Calu3 (cell line): ENCODE measurements at regions of chrX and their contacts with region 1.

Region 1: GRCh38 chrX:84339507-84340364 is 151.7 kb upstream of the RPS6KA6 start:
- DNase-seq: no peak
- H3K4me3 Mint-ChIP-seq: no peak overlapping the region
- H3K27ac Mint-ChIP-seq: no peak overlapping the region
- H3K4me1 Mint-ChIP-seq: no peaks in the 10 kb centered on the region
- H3K27me3 Mint-ChIP-seq: no peaks in the 10 kb centered on the region
- CTCF ChIP-seq: no peak

Region 2: GRCh38 chrX:84133023-84133422 is 206.7 kb before region 1 on chrX:
- CTCF ChIA-PET with region 1: no interaction called
- intact Hi-C with region 1: no loop called
- DNase-seq: no peak
- H3K4me3 Mint-ChIP-seq: no peak overlapping the region
- H3K27ac Mint-ChIP-seq: no peak overlapping the region
- H3K4me1 Mint-ChIP-seq: no peaks in the 10 kb centered on the region
- H3K27me3 Mint-ChIP-seq: no peaks in the 10 kb centered on the region
- CTCF ChIP-seq: no peak

Region 3: GRCh38 chrX:84175958-84176357 is 163.8 kb before region 1 on chrX:
- CTCF ChIA-PET with region 1: no interaction called
- intact Hi-C with region 1: no loop called
- DNase-seq: no peak
- H3K4me3 Mint-ChIP-seq: no peak overlapping the region
- H3K27ac Mint-ChIP-seq: no peak overlapping the region
- H3K4me1 Mint-ChIP-seq: no peaks in the 10 kb centered on the region
- H3K27me3 Mint-ChIP-seq: no peaks in the 10 kb centered on the region
- CTCF ChIP-seq: no peak

Region 4: GRCh38 chrX:84205276-84205675 is 134.5 kb before region 1 on chrX:
- CTCF ChIA-PET with region 1: no interaction called
- intact Hi-C with region 1: loop called (anchors 10 kb)
- DNase-seq: no peak
- H3K4me3 Mint-ChIP-seq: no peak overlapping the region
- H3K27ac Mint-ChIP-seq: no peak overlapping the region
- H3K4me1 Mint-ChIP-seq: peaks cover 7% of the 10 kb centered on the region
- H3K27me3 Mint-ChIP-seq: no peaks in the 10 kb centered on the region
- CTCF ChIP-seq: no peak

Region 5: DNA sequence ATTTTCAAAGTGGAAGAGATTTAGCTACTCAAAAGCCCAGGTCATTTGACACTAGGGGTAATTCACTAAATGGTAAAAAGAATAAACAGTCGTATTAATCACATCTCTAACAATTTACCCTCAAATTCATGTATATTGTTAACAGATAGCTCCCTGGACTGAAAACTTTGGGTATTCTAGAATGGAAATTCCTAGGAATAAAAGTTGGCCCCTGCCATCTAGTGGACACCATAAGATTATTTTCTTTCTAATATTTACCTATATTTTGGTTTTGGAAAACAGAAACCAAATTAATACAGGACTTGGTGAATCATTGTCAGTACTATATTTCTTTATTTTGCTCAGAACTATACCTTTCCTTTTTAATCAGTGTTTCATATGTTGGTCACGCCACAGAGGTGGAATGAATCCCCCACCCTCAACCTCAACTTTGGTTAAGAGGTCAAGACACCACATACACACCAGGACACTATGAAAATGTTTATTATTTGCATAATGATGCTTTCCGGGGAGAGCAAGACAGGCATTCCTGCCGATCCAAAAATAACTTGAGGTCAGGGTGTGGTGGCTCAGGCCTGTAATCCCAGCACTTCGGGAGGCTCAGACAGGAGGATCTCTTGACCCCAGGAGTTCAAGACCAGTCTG is 567.7 kb after region 1 on chrX:
- CTCF ChIA-PET with region 1: no interaction called
- intact Hi-C with region 1: loop called (anchors 5 kb)
- DNase-seq: no peak
- H3K4me3 Mint-ChIP-seq: no peak overlapping the region
- H3K27ac Mint-ChIP-seq: no peak overlapping the region
- H3K4me1 Mint-ChIP-seq: no peaks in the 10 kb centered on the region
- H3K27me3 Mint-ChIP-seq: no peaks in the 10 kb centered on the region
- CTCF ChIP-seq: no peak

Region 6: GRCh38 chrX:85052636-85053343 is 713.1 kb after region 1 on chrX:
- CTCF ChIA-PET with region 1: no interaction called
- intact Hi-C with region 1: loop called (anchors 5 kb)
- DNase-seq: no peak
- H3K4me3 Mint-ChIP-seq: no peak overlapping the region
- H3K27ac Mint-ChIP-seq: peak overlapping the region; percentile 16
- H3K4me1 Mint-ChIP-seq: peaks cover 8% of the 10 kb centered on the region
- H3K27me3 Mint-ChIP-seq: no peaks in the 10 kb centered on the region
- CTCF ChIP-seq: no peak